Vagina (tissue), 2 donors: ENCODE measurements at regions of chr11 and their contacts with region 1.

Region 1: GRCh38 chr11:122778148-122778547 is 60.2 kb upstream of the CRTAM start:
- DNase-seq: no peak
- H3K4me3 ChIP-seq: no peak overlapping the region
- H3K27ac ChIP-seq: no peak overlapping the region
- H3K4me1 ChIP-seq: peaks cover 12% of the 10 kb centered on the region
- H3K27me3 ChIP-seq: no peaks in the 10 kb centered on the region
- CTCF ChIP-seq: no peak
- POLR2A ChIP-seq: no peak

Region 2: GRCh38 chr11:122633219-122633829 is 144.8 kb before region 1 on chr11:
- intact Hi-C with region 1: loop called (anchors 10 kb)
- DNase-seq: no peak
- H3K4me3 ChIP-seq: no peak overlapping the region
- H3K27ac ChIP-seq: no peak overlapping the region
- H3K4me1 ChIP-seq: no peaks in the 10 kb centered on the region
- H3K27me3 ChIP-seq: no peaks in the 10 kb centered on the region
- CTCF ChIP-seq: peak in 2 of 3 experiments; percentile 14 to 48
- POLR2A ChIP-seq: no peak

Region 3: DNA sequence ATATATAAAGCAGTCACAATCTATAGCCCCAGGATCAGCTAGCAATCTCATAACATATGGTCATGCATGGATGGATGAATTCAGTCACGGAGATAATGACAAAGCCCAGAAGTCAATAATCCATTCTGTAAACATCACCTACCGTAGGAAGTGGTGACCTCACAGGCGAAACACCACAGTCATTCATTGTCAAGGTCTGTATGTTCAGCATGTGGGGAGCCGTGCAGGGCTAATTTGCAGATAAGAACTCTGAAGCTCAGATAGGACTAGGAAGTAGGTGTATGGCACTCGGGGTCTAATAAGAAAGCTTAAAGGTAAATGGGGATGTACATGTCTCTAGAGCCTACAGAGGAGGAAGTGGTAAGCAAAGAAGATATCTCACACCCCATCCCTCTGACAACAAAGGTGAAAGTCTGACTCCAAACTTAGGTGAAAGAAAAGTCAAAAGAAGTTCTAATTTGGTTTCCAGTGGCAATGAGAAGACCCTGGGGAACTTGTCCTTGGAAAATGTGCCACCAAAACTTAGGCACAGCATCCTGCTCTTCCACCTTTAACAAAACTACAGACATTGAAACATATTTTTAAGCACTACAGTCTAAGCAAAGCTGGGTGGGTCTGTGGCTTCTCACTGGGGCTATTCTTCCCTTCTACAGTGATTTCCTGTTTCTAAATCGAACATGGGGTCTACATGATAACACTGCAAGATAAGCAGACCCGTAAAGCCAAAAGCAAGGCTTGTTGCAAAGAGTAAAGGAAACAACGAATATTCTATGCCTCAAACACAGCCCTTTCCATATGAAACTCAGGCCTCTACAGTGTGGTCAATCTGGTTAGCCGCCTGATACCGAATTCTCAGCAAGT is 65.4 kb after region 1 on chr11:
- intact Hi-C with region 1: no loop called
- DNase-seq: no peak
- H3K4me3 ChIP-seq: no peak overlapping the region
- H3K27ac ChIP-seq: no peak overlapping the region
- H3K4me1 ChIP-seq: no peaks in the 10 kb centered on the region
- H3K27me3 ChIP-seq: no peaks in the 10 kb centered on the region
- CTCF ChIP-seq: no peak
- POLR2A ChIP-seq: no peak